ENCODE measurements at regions of chr10 and their contacts with region 1.

Region 1: DNA sequence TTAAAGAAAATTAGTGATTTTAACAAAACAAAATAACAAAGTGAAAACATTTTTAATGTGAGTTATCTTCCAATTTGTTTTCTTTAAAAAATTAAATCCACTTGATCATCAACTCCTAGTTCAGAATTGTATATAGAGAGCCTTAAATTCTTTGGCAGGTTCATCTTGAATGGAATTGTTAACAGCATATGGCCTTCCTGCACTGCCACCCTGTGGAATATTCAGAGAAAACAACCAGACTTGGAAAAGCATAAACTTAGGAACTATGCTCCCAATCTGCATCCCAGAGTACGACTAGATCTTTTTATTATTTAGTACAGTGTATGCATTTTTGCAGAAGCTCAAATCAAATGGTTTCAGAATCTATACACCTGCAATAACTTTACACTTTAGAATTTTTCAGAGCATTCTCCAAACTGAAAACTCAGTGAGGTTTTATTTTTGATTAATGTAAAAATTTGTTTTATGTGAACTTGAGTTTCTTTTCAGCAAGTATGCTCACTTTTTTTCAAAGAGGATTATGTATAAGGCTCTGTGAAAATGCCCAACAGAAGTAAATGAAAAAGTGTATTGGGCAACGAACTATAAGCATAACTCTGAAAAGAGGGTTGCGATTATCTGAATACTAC is 44.9 kb upstream of the ANK3 start:
- DNase-seq: peak; percentile 76
- H3K4me3 ChIP-seq: no peak overlapping the region
- H3K27ac ChIP-seq: peak overlapping the region; percentile 12; the same call in 1 of the 2 replicates
- H3K4me1 ChIP-seq: peaks cover 28% of the 10 kb centered on the region
- H3K27me3 ChIP-seq: no peaks in the 10 kb centered on the region

Region 2: DNA sequence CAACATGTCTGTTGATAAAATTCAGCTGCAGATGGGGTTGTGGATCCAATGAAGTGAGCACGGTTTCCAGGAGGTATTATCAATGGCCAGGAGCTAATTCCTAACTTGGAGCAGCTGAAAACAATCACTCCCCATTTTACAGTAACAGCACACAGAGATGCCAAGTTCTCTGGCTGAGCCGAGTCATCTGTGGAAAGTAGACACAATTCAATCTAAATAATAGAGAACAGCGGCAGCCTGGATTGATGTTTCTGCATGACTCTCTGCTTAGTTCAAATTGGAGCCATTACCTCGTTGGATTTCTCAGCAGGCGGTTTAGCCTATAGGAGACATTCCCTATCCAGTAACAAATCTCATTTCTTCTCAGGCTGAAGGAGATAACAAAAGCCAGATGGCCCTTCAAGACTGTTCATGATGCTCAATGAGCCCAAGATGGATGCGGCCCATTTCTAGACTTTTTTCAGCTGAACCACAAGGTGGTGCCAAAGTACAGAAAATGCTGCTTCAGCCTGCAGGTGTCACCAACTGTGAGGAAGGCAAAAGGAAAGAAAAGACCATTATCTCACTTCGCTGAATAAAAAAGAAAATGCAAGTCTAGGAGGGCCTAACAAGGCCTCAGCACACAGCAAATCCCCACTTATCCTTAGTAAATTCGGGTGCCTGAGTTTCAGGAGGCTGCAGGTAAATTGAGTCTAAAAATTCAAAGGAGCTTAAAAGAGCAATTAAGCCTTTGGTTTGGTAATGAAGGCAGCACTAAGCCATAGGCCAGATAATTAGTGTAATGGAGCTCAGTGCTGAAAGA is 808.6 kb before region 1 on chr10:
- in situ Hi-C with region 1: loop called (anchors 25 kb)
- DNase-seq: peak; percentile 80
- H3K4me3 ChIP-seq: no peak overlapping the region
- H3K27ac ChIP-seq: no peak overlapping the region
- H3K4me1 ChIP-seq: no peaks in the 10 kb centered on the region
- H3K27me3 ChIP-seq: no peaks in the 10 kb centered on the region; the same call in 1 of the 2 replicates

Region 3: DNA sequence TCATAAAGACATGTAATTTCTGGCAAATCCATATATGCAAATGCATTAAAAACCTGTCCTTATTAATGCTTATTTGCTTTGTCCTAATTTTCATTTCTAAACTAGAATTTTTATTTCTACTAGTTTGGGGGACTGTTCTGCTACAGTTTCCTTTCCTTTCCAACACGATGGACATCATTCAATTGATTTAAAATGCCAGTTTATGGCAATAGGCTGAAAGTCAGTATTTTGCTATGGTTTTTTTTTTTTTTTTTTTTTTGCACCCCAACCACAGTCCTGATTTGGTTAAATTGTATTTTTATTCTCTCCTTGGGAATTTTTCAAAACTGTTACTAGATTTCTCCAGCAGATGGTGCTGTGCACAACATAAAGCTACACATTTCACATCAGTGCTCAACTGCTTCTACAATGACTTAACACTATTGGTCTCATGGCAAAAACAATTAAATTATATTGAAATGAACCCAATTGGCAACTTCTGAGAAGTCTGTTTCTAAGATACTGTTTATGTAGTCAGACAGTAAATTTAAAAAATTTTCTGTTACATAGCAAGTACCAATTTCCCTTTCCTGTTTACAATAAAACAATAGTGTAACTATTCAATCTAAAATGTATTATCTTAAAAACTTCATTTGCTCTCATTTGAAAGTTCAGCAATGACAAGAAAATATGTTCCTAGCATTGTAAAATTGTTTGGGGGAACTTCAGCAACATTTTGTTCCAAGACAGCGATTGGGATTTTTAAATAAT is 334.4 kb before region 1 on chr10:
- in situ Hi-C with region 1: loop called (anchors 10 kb)
- DNase-seq: peak; percentile 76
- H3K4me3 ChIP-seq: no peak overlapping the region
- H3K27ac ChIP-seq: no peak overlapping the region
- H3K4me1 ChIP-seq: peaks cover 7% of the 10 kb centered on the region
- H3K27me3 ChIP-seq: no peaks in the 10 kb centered on the region

Region 4: GRCh38 chr10:60237977-60238758 is 196.4 kb before region 1 on chr10:
- in situ Hi-C with region 1: loop called (anchors 10 kb)
- DNase-seq: peak; percentile 49
- H3K4me3 ChIP-seq: 0 out of 2 replicates have a peak overlapping the region, but pooled peaks have one; percentile 26
- H3K27ac ChIP-seq: no peak overlapping the region
- H3K4me1 ChIP-seq: peaks cover 3% of the 10 kb centered on the region; the same call in 1 of the 2 replicates
- H3K27me3 ChIP-seq: no peaks in the 10 kb centered on the region

Region 5: GRCh38 chr10:60291344-60291930 is 143.1 kb before region 1 on chr10:
- in situ Hi-C with region 1: no loop called
- DNase-seq: peak; percentile 18
- H3K4me3 ChIP-seq: no peak overlapping the region
- H3K27ac ChIP-seq: no peak overlapping the region
- H3K4me1 ChIP-seq: no peaks in the 10 kb centered on the region
- H3K27me3 ChIP-seq: no peaks in the 10 kb centered on the region